Heart right ventricle (tissue), 16 donors: ENCODE measurements at regions of chr12 and their contacts with region 1.

Region 1: DNA sequence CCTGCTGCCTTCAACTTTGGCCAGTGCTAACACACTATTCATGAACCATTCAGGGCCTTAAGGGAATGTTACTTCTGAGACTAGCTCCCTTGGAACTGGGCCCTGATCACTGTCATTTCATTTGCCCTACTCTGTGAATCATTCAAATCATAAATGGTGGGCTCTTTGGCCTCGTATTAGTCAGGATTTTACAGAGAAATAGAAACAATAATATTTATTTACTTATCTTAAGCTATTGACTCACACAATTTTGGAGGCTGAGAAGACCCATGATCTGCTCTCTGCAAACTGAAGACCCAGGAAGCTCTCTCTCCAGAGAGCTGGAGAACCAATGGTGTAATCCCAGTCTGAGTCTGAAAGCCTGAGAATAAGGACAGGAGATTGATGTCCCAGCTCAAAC is 398.5 kb downstream of the LRIG3 start:
- DNase-seq: no peak
- ATAC-seq: no peak
- H3K4me3 ChIP-seq: no peak overlapping the region
- H3K27ac ChIP-seq: no peak overlapping the region
- H3K4me1 ChIP-seq: no peaks in the 10 kb centered on the region
- H3K27me3 ChIP-seq: no peaks in the 10 kb centered on the region
- CTCF ChIP-seq: no peak

Region 2: GRCh38 chr12:59383056-59383822 is 861.4 kb after region 1 on chr12:
- intact Hi-C with region 1: no loop called
- DNase-seq: no peak
- ATAC-seq: no peak
- H3K4me3 ChIP-seq: peak overlapping the region in 1 of 10 donors; percentile 13
- H3K27ac ChIP-seq: no peak overlapping the region
- H3K4me1 ChIP-seq: peaks cover 0 to 3% (median 0%) of the 10 kb centered on the region in 9 donors
- H3K27me3 ChIP-seq: no peaks in the 10 kb centered on the region
- CTCF ChIP-seq: no peak

Region 3: DNA sequence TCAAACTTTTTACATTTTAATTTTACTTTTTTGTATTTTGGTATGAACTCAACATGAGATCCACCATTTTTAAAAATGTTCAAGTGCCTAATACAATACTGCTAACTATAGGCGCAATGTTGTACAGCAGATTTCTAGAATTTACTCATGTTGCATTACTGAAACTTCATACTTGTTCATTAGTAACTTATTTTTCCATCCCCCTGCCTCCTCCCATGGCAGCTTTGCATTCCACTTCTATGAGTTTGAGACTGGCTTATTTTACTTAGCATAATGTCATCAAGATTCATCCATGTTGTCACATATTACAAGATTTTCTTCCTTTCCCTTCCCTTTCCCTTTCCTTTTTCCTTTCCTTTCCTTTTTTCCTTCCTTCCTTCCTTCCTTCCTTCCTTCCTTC is 1899.9 kb after region 1 on chr12:
- intact Hi-C with region 1: loop called in 1 of 10 experiments (anchors 5 kb)
- DNase-seq: no peak
- ATAC-seq: no peak
- H3K4me3 ChIP-seq: no peak overlapping the region
- H3K27ac ChIP-seq: no peak overlapping the region
- H3K4me1 ChIP-seq: no peaks in the 10 kb centered on the region
- H3K27me3 ChIP-seq: no peaks in the 10 kb centered on the region
- CTCF ChIP-seq: no peak